Sigmoid colon (tissue), 7 donors: ENCODE measurements at regions of chr15 and their contacts with region 1.

Region 1: GRCh38 chr15:29765898-29766527 is 56.3 kb downstream of the TJP1 start:
- DNase-seq: no peak
- H3K4me3 ChIP-seq: no peak overlapping the region
- H3K27ac ChIP-seq: no peak overlapping the region
- H3K4me1 ChIP-seq: peaks cover 0 to 36% (median 18%) of the 10 kb centered on the region in 4 donors
- H3K27me3 ChIP-seq: no peaks in the 10 kb centered on the region
- CTCF ChIP-seq: no peak
- EP300 ChIP-seq: no peak
- POLR2A ChIP-seq: no peak

Region 2: DNA sequence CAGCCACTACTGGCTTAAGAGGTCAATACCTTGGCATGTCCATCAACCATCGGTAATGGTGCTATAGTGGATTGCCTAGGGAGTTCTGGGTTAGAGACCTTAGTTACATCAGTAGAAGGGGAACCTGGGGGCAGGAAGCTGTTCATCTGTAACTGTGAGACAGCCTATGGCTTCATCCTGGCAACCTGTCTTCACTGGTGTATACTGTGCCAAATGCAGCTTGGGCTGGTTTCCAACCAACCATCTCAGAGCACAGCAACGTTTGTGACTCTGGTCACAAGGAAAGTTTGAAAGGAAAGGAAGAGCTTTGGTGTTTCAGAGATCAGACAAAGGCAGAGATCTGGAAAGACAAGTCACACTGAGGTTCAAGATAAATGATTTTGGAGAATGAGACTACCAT is 37.6 kb before region 1 on chr15:
- intact Hi-C with region 1: no loop called
- DNase-seq: no peak
- H3K4me3 ChIP-seq: no peak overlapping the region
- H3K27ac ChIP-seq: no peak overlapping the region
- H3K4me1 ChIP-seq: peaks cover 0 to 29% (median 16%) of the 10 kb centered on the region in 4 donors
- H3K27me3 ChIP-seq: no peaks in the 10 kb centered on the region
- CTCF ChIP-seq: no peak
- EP300 ChIP-seq: no peak
- POLR2A ChIP-seq: no peak

Region 3: DNA sequence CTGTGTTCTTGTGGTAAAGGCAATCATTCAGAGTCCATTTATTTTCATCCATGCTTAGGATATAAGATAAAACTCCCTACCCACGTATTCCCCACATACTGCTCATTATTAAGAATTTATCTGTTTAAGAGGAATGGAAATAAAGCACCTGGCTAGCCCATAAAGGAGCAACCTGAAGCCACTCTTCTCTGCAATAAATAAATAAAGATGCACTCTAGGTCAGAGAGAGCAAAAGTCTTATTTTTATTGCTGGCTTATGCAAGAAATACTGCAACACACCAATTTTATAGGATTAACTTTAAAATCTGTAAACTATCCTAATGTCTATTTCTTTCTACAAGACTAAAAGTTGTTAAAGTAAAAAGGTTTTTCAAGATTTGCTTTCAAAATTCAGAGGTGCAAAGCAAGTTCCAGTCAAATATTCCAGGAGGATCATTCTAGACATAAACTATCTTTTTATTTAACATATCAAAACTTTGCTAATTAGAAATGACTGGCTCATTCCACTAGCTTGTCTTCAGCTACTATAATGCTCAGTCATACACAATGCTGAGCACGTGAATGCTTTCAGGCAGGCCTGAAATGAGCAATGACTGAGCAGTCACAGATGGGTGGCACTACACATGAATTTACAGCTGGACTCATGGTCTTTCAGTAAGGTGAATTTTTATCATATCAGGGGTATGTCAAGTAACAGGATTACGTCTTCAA is 49.1 kb after region 1 on chr15:
- intact Hi-C with region 1: loop called (anchors 10 kb)
- DNase-seq: no peak
- H3K4me3 ChIP-seq: no peak overlapping the region
- H3K27ac ChIP-seq: peak overlapping the region in 3 of 4 donors; percentile 33 to 72 (median 62)
- H3K4me1 ChIP-seq: peaks cover 0 to 73% (median 53%) of the 10 kb centered on the region in 4 donors
- H3K27me3 ChIP-seq: no peaks in the 10 kb centered on the region
- CTCF ChIP-seq: no peak
- EP300 ChIP-seq: no peak
- POLR2A ChIP-seq: no peak